Left colon (tissue), 2 donors: ENCODE measurements at regions of chr9 and their contacts with region 1.

Region 1: DNA sequence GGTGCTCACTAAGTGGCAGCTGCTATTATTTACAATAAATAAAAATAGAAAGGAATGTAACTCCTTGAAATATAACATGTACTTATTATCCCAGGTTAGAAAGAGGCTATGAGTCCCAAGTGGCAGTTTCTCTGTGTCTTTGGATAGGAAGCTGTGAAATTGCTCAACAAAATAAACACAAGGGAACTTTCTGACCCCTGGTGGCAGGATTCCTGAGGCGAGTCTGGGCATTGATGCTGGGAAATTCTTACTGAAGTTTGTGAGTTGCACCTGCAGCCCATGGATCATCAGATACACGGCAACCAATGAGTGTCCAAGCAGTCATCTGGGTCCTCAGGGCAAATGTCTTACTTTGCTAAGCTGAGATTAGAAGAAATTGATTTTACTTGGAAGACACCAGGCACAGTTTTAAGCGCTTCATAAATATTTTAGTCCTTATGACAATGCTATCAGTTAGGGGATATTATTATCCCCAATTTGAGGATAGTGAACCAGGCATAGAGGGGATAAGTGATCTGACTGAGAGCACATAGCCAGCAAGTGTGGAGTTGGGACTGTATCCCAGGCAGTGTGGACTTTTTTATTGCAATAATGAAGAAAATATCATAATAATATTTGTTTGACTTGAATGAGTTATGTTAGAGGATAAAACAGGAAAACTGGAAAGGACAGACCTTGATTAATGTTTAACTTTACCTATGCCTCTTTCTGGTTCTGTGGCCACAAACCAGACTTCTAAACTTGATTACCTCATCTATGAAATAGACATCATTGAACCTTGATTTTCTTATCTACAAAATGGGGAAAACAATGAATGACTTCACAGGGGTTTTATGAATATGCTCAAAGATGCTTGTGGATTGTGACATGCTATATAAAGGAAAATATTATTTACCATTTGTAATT is 265.5 kb upstream of the ADAMTSL1 start:
- DNase-seq: peak; percentile 71 to 76
- ATAC-seq: peak; percentile 86

Region 2: DNA sequence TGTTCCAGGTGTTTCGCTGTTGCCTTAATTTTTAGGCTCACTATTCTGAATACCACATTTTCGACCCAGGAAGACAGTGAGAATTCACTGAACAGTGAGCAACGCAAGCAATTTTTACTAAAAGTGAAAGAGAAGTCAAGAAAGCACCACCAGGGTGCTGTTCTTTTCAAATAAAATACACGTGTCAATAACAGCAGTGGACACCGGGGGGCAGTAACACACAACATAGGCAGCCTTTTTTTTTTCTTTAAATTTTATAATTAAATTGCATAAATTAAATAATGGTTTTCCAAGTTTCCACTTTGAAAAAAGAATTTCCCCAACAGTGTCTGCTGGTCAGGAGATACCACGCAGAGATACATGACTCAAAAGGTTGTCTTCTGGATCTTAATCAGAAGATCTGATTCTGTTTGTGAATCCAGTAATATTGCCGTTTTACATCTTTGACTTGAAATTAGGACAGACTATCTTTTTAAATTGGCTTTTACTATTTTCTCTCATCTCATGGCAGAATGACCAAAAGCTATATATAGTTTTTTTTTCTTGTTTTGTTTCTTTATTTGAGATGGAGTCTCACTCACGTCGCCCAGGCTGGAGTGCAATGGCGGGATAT is 676.7 kb before region 1 on chr9:
- intact Hi-C with region 1: loop called in 1 of 2 experiments (anchors 5 kb)
- DNase-seq: peak in 1 of 2 donors; percentile 47
- ATAC-seq: peak; percentile 36

Region 3: DNA sequence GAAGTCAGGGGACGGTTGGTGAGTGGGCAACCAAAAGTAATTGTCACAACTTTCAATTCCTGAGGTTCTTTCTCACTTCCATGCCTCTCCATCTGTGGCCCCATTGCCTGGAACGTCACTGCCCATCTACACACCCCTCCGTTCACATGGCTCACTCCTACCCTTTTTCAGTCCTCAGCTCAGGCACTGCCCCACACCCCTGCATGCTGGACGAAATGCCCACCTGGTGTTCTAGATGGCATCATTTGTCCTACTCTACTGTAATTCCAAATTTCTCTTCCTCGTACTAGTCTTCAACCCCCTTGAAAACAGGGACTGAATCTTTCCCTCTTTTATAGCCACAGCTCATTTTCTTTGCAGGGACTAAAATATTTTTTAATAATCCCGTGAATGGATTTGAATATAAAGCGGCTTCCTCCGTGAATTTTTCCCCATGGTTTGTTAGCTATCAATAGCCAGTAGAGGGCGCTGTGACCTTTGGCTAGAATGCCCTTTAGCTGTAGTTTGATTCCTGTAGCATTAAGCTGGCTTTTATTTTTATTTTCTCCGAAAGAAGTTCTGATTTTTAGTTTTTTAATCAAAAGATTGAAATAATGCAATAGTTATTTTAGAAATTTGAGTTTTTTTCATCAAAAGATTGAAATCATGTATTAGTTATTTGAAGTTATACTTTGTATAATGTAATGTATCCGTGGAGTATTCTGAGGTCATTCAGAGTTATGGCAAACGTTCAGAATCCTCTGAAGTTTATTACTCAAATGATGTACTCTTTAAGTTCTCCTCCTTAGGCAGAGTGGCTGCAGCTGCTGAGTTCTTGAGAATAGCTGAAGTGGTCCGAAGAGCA is 397.5 kb before region 1 on chr9:
- intact Hi-C with region 1: loop called (anchors 2 to 5 kb)
- DNase-seq: peak; percentile 43 to 69
- ATAC-seq: peak; percentile 56

Region 4: DNA sequence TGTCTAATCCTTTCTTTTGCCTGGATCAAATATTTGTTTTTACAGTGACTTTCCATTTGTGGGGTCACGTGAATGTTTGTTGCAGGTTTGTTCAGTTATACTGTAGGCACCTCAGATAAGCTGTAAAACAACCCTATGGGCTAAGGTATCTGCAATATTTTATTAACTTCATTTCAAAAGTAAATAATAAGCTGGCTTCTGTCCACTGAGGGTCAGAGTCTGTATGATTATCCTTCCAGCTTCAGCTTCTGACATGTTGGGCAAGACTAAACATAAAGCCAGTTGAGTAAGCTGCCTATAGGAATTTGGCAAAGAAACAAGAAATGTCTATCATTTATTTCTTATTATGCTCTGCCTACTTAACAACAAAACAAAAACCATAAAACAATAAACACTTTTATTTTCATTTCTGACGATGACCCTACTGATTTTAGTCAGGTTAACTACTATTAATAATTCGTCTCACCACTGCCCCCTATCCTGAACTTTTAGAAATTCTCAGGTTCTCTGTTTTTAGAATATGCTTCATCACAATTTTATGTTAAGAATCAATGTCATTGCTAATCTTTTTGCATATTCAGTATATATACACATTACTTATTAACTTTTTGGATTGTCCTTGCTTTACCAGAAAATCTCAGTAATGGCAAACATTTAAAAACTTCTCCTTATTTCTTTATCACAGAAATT is 148.0 kb before region 1 on chr9:
- intact Hi-C with region 1: loop called in 1 of 2 experiments (anchors 10 kb)
- DNase-seq: no peak
- ATAC-seq: peak; percentile 62